ENCODE measurements at regions of chr3 and their contacts with region 1.

Region 1: DNA sequence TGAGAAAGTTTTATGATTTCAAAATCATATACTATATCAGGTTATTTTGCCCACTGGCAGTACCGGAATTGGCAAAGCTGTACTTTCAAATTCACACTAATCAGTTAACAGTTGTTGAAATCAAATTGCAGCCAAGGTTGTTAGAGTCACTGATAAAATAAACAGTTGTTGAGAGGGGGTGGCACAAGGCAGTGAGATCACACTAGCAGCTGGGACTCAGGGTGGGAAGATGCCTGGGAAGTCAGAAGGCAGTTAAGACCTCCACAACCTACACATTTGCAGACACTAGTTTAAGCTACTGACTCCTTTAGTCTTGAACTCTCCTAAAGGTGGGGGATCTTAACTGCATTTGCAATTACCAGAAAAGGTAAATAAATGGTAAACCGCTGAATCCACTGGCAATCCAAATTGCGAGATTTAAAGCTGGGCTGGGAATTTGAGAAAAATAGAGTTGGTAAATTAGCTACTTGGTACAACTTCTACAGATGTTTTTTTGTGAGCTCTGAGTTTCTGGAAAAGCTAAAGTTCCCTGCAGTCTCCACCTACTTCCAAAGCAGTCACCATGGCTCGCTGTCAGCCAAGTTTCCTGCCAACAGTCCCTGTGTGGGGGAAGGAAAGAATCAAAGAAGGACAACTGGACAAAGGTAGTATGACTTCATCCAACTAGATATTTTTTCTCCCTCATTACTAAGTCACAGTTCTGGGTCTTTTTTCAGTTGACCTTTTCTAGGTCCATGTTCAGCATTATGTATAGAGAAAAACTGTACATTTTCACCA is 105.7 kb downstream of the ZNF385D start:
- DNase-seq: peak; percentile 31 to 86
- H3K4me3 ChIP-seq: peak overlapping the region in 1 of 2 donors; percentile 43
- H3K27ac ChIP-seq: peak overlapping the region; percentile 80 to 85
- H3K4me1 ChIP-seq: peaks cover 2 to 17% of the 10 kb centered on the region in 2 donors
- H3K27me3 ChIP-seq: no peaks in the 10 kb centered on the region
- CTCF ChIP-seq: no peak

Region 2: DNA sequence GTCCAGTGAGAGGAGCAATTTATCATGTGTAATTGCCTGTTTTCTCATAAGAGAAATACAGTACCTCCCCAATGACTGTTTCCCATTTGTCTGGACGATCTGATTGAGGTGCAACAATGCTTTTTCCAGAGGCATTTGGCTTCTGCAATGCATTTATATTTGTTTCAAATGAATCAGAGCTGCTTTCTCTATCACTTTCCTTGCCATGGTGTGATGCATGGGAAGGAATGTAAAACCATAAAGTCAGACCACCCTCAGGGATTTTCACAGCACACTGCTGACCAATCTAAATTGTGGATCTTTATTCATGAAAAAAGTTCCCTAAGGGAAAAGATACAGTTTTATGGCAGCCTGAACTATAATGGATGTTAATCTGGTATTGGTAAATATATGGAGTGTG is 227.3 kb before region 1 on chr3:
- intact Hi-C with region 1: no loop called
- DNase-seq: no peak
- H3K4me3 ChIP-seq: no peak overlapping the region
- H3K27ac ChIP-seq: no peak overlapping the region
- H3K4me1 ChIP-seq: no peaks in the 10 kb centered on the region
- H3K27me3 ChIP-seq: no peaks in the 10 kb centered on the region
- CTCF ChIP-seq: no peak

Region 3: GRCh38 chr3:21587894-21588293 is 57.4 kb before region 1 on chr3:
- intact Hi-C with region 1: loop called (anchors 10 kb)
- DNase-seq: no peak
- H3K4me3 ChIP-seq: no peak overlapping the region
- H3K27ac ChIP-seq: no peak overlapping the region
- H3K4me1 ChIP-seq: peaks cover 0 to 11% of the 10 kb centered on the region in 2 donors
- H3K27me3 ChIP-seq: no peaks in the 10 kb centered on the region
- CTCF ChIP-seq: no peak

Region 4: DNA sequence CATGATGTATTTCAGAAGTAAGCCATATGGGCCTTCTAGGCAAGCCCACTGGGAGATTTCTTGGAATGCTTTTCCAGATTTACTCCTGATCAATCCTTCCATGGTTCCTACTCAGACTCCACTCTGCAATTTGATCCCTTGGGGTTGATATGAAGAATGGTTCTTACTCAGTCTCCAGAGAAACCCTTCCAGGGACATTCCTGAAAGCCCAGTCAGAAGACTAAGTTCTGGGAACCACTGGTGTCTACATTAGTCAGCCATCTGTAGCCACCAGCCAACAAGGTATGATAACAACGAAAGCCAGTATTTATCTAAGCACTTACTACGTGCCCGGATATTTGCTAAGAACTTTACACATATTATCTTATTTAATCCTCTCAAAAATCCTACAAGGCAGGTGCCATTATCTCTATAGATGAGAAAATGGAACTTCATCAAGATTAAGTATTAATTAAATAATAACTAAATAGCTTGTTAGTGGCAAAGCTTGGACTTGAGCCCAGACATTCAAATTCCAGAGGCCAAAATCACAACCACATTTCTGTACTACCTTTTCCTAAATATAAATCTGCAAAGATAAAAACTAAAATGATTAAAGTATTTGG is 73.0 kb after region 1 on chr3:
- intact Hi-C with region 1: loop called (anchors 5 kb)
- DNase-seq: peak in 1 of 2 donors; percentile 83
- H3K4me3 ChIP-seq: no peak overlapping the region
- H3K27ac ChIP-seq: peak overlapping the region; percentile 80 to 85
- H3K4me1 ChIP-seq: peaks cover 8 to 35% of the 10 kb centered on the region in 2 donors
- H3K27me3 ChIP-seq: no peaks in the 10 kb centered on the region
- CTCF ChIP-seq: no peak

Region 5: GRCh38 chr3:21754839-21755238 is 109.5 kb after region 1 on chr3:
- intact Hi-C with region 1: no loop called
- DNase-seq: no peak
- H3K4me3 ChIP-seq: no peak overlapping the region
- H3K27ac ChIP-seq: no peak overlapping the region
- H3K4me1 ChIP-seq: peaks cover 0 to 4% of the 10 kb centered on the region in 2 donors
- H3K27me3 ChIP-seq: no peaks in the 10 kb centered on the region
- CTCF ChIP-seq: no peak